ENCODE measurements at regions of chr14 and their contacts with region 1.

Region 1: GRCh38 chr14:51989293-51990234 is at the start of gene RTRAF:
- DNase-seq: peak; percentile 95 to 97 (median 96)
- ATAC-seq: peak; percentile 99
- H3K4me3 ChIP-seq: peak within 1 kb of the TSS; percentile 89
- H3K4me1 ChIP-seq: no peaks in the 10 kb centered on the region
- CTCF ChIP-seq: no peak
- total RNA-seq, gene RTRAF: 108 to 140 (median 131) TPM

Region 2: GRCh38 chr14:51691176-51691575 is 298.4 kb before region 1 on chr14:
- intact Hi-C with region 1: no loop called
- DNase-seq: no peak
- ATAC-seq: no peak
- H3K4me3 ChIP-seq: no peak overlapping the region
- H3K4me1 ChIP-seq: no peaks in the 10 kb centered on the region
- CTCF ChIP-seq: no peak

Region 3: GRCh38 chr14:52068615-52069303 is 79.2 kb after region 1 on chr14 and contains the start of gene NID2:
- intact Hi-C with region 1: loop called in 1 of 2 experiments (anchors 10 kb)
- DNase-seq: peak; percentile 70 to 83 (median 81)
- ATAC-seq: peak; percentile 87
- H3K4me3 ChIP-seq: peak within 1 kb of the TSS; percentile 23
- H3K4me1 ChIP-seq: peaks cover 9% of the 10 kb centered on the region
- CTCF ChIP-seq: no peak
- total RNA-seq, gene NID2: 21.7 to 32.5 (median 28.8) TPM

Region 4: GRCh38 chr14:52272375-52272774 is 282.8 kb after region 1 on chr14:
- intact Hi-C with region 1: loop called in 1 of 2 experiments (anchors 10 kb)
- DNase-seq: peak in 2 of 3 donors; percentile 37 to 73
- ATAC-seq: peak; percentile 42
- H3K4me3 ChIP-seq: no peak overlapping the region
- H3K4me1 ChIP-seq: peaks cover 2% of the 10 kb centered on the region
- CTCF ChIP-seq: no peak

Measured in mucosa of descending colon (tissue), 3 donors.